ENCODE measurements at regions of chr1 and their contacts with region 1.

Region 1: GRCh38 chr1:10796019-10796944 is at the start of gene CASZ1:
- DNase-seq: peak; percentile 84 to 96 (median 89)
- ATAC-seq: peak; percentile 76 to 88 (median 84)
- H3K4me3 ChIP-seq: peak within 1 kb of the TSS; percentile 51 to 77 (median 60)
- H3K27ac ChIP-seq: peak within 1 kb of the TSS in 3 of 4 donors; percentile 44 to 78 (median 49)
- H3K4me1 ChIP-seq: peaks cover 5 to 13% (median 7%) of the 10 kb centered on the region in 3 donors
- H3K27me3 ChIP-seq: no peaks in the 10 kb centered on the region
- CTCF ChIP-seq: no peak
- total RNA-seq, gene CASZ1: 12.3 to 18.9 (median 13.8) TPM

Region 2: DNA sequence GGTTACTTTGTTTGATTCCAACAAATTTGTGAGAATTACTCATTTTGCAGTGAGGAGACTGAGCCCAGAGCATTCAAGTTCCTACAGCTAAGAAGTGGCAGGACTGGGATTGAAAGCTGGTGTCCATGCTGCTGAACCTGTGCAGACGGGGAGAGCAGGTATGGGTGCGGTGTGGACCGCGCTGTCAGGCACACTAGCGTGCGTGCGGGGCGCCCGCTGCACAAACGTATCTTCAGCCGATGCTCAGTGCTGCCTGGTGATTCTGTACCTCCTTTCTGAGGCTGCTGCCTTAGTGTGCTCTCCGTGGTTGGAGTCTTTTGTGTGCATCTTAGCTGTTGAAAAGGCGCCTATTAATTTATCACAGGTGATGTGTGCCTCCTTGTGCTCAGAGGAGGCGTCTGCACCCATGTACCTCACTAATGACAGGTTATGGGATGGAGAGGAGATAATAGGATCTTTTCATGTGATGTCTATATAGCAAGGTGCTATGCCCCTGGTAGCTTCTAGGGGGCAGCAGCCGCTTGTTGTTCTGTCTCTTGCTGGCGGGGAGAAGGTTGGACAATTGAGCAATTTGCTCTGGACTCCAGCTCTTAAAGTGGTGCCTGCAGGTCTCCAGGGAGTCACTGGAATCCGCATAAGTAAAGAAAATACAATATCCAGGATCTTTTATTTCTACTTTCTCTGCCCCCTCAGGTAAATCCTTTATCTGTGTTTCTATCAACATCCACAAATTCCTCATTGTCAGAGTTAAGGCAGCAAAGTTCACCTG is 289.0 kb before region 1 on chr1:
- intact Hi-C with region 1: loop called in 1 of 3 experiments (anchors 10 kb)
- DNase-seq: peak; percentile 47 to 67 (median 54)
- ATAC-seq: peak; percentile 89 to 93 (median 92)
- H3K4me3 ChIP-seq: no peak overlapping the region
- H3K27ac ChIP-seq: no peak overlapping the region
- H3K4me1 ChIP-seq: peaks cover 9 to 20% (median 10%) of the 10 kb centered on the region in 3 donors
- H3K27me3 ChIP-seq: no peaks in the 10 kb centered on the region
- CTCF ChIP-seq: peak; percentile 14 to 78 (median 60)

Region 3: DNA sequence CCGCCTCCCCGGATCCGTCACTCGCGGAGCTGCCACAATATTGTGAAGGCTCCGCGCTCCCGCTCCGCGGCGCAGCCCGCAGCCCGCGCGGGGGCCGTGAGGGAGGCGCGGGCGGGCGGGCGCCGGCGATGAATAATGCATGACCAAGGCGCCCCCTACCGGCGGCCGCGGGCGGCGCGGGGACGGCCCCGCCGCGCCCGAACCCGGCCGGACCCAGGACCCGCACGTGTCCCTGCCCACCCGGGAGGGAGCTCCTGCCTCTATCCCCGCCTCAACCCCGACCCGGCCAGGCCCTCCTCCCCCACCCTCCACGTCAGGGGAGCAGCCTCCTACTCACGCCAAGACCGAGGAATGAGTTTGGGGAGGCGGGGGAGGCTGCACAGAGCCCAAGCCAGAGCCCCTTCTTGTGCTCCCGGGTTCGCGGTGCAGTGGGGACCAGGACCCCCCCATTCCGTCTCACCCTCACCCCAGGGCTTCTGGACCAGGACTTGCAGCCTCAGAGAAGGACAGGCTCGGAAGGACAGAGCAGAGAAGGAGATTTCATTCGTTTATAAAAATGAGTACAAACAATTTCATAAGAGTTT is 70.9 kb after region 1 on chr1:
- intact Hi-C with region 1: no loop called
- DNase-seq: peak; percentile 30 to 90 (median 66)
- ATAC-seq: peak; percentile 87 to 95 (median 94)
- H3K4me3 ChIP-seq: peak overlapping the region in 3 of 4 donors; percentile 3 to 45 (median 20)
- H3K27ac ChIP-seq: no peak overlapping the region
- H3K4me1 ChIP-seq: no peaks in the 10 kb centered on the region
- H3K27me3 ChIP-seq: no peaks in the 10 kb centered on the region
- CTCF ChIP-seq: peak; percentile 57 to 80 (median 69)